BJ (cell line): ENCODE measurements at regions of chr5 and their contacts with region 1.

Region 1: GRCh38 chr5:10283927-10284635 is 23.6 kb downstream of the CMBL start:
- DNase-seq: no peak
- H3K4me3 ChIP-seq: no peak overlapping the region
- H3K27me3 ChIP-seq: no peaks in the 10 kb centered on the region
- CTCF ChIP-seq: peak; percentile 96

Region 2: DNA sequence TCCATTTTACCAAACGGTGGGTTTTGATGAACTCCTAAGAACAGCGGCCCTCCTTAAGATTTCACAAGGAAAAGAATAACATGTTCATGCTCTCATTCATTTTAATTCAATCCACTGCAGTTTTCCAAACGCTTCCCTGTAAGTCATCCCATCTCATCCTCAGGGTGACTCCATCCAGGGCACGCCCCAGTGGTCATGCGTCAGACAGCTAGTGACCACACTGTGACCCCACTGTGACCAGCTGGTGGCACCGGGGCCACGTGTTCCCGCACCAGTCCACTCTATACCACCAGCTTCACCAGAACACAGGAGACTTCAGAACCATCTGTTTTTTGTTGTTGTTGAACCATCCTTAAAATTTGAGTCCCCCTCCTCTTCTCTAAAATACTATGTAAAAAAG is 48.7 kb before region 1 on chr5:
- CTCF ChIA-PET with region 1: no interaction called
- POLR2A ChIA-PET with region 1: no interaction called
- DNase-seq: no peak
- H3K4me3 ChIP-seq: no peak overlapping the region
- H3K27me3 ChIP-seq: no peaks in the 10 kb centered on the region
- CTCF ChIP-seq: no peak

Region 3: DNA sequence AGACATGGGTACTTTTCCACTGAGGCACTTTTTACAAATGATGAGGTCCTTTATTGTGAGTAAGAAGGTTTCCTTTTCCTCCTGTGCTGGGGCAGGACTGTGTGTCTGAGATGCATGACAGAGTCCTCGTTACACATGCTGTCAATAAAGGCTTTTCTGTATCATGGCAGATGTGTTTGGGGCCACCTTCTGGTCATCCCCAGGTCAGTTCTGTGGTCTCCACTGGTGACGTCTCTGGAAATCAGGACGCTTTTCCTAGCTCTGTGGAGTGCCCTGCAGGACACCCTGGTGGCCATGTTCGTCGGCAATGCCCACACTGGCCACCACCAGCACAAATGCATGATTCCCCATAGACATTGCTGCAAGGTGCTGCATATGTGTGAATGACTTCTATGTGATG is 20.9 kb after region 1 on chr5:
- CTCF ChIA-PET with region 1: interaction called, 13 read pairs
- POLR2A ChIA-PET with region 1: no interaction called
- DNase-seq: no peak
- H3K4me3 ChIP-seq: no peak overlapping the region
- H3K27me3 ChIP-seq: no peaks in the 10 kb centered on the region
- CTCF ChIP-seq: no peak

Region 4: GRCh38 chr5:10424124-10424731 is 140.1 kb after region 1 on chr5:
- CTCF ChIA-PET with region 1: interaction called, 22 read pairs
- POLR2A ChIA-PET with region 1: no interaction called
- DNase-seq: no peak
- H3K4me3 ChIP-seq: no peak overlapping the region
- H3K27me3 ChIP-seq: no peaks in the 10 kb centered on the region
- CTCF ChIP-seq: peak; percentile 60